ENCODE measurements at regions of chr14 and their contacts with region 1.

Region 1: GRCh38 chr14:101964297-101965144 is at the start of gene DYNC1H1:
- DNase-seq: peak; percentile 85 to 92 (median 89)
- H3K4me3 ChIP-seq: peak within 1 kb of the TSS; percentile 45 to 82
- H3K4me3 Mint-ChIP-seq: peak within 1 kb of the TSS; percentile 89 to 92 (median 91)
- H3K27ac ChIP-seq: peak within 1 kb of the TSS; percentile 79
- H3K27ac Mint-ChIP-seq: peak within 1 kb of the TSS; percentile 92 to 96 (median 93)
- H3K4me1 ChIP-seq: peaks cover 46% of the 10 kb centered on the region
- H3K4me1 Mint-ChIP-seq: peaks cover 27 to 61% (median 43%) of the 10 kb centered on the region in 4 donors
- H3K27me3 ChIP-seq: no peaks in the 10 kb centered on the region
- H3K27me3 Mint-ChIP-seq: no peaks in the 10 kb centered on the region
- total RNA-seq, gene DYNC1H1: 314 to 318 TPM

Region 2: GRCh38 chr14:101947906-101948665 is 16.4 kb before region 1 on chr14:
- CTCF ChIA-PET with region 1: interaction called, 8 read pairs
- POLR2A ChIA-PET with region 1: interaction called, 32 read pairs
- intact Hi-C with region 1: loop called (anchors 1 kb)
- DNase-seq: peak; percentile 99 to 100 (median 100)
- H3K4me3 ChIP-seq: peak overlapping the region; percentile 87 to 98
- H3K4me3 Mint-ChIP-seq: peak overlapping the region; percentile 92 to 99 (median 96)
- H3K27ac ChIP-seq: peak overlapping the region; percentile 94
- H3K27ac Mint-ChIP-seq: peak overlapping the region; percentile 99 to 100 (median 100)
- H3K4me1 ChIP-seq: peaks cover 13% of the 10 kb centered on the region
- H3K4me1 Mint-ChIP-seq: peaks cover 6 to 31% (median 21%) of the 10 kb centered on the region in 4 donors
- H3K27me3 ChIP-seq: peaks cover 5% of the 10 kb centered on the region
- H3K27me3 Mint-ChIP-seq: peaks cover 9 to 16% of the 10 kb centered on the region in 2 donors

Region 3: DNA sequence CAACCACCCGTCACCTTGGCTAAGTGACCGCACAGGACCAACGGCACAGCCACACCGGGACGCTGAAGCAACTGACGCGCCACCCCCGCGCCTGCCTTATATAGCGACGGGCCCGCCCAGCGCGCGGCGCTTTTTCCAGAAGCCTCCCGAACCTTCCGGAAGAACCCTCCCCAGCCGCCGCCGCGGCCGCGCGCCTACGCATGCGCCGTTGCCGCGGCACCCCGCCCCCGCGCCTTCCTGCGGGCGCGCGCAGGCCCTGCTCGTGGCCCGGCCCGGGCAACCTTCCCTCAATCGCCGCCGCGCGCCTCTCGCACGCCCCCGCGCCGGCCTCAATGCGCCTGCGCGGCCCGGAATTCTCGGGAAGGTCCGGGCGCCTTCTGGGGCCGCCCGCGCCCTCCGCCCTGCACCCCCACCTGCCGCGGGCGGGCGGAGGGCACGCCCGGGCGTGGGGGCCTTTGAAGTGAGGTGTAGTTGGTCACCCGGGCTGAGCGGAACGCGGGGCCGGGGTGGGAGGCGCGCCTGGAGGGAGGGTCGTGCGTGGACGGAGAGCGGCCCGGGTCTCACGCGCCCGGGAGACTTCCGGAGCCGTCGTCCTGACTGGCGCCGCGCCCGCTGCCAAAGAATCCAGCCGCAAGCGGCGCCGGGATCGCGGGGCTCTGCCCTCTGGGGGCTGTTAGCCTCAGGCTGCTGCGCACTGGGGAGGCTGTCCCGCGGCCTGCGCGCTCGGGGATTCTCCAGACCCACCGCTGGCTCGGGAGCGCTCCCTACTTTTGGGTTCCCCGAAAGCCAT is 122.6 kb after region 1 on chr14 and contains the start of gene HSP90AA1:
- CTCF ChIA-PET with region 1: interaction called, 3 read pairs
- POLR2A ChIA-PET with region 1: interaction called, 6 read pairs
- intact Hi-C with region 1: loop called (anchors 1 kb)
- DNase-seq: peak; percentile 90 to 95 (median 94)
- H3K4me3 ChIP-seq: peak within 1 kb of the TSS; percentile 80 to 85
- H3K4me3 Mint-ChIP-seq: peak within 1 kb of the TSS; percentile 91 to 99 (median 97)
- H3K27ac ChIP-seq: peak within 1 kb of the TSS; percentile 94
- H3K27ac Mint-ChIP-seq: peak within 1 kb of the TSS; percentile 93 to 99 (median 97)
- H3K4me1 ChIP-seq: peaks cover 51% of the 10 kb centered on the region
- H3K4me1 Mint-ChIP-seq: peaks cover 46 to 68% (median 56%) of the 10 kb centered on the region in 4 donors
- H3K27me3 ChIP-seq: no peaks in the 10 kb centered on the region
- H3K27me3 Mint-ChIP-seq: no peaks in the 10 kb centered on the region
- total RNA-seq, gene HSP90AA1: 275 to 297 TPM

Region 4: DNA sequence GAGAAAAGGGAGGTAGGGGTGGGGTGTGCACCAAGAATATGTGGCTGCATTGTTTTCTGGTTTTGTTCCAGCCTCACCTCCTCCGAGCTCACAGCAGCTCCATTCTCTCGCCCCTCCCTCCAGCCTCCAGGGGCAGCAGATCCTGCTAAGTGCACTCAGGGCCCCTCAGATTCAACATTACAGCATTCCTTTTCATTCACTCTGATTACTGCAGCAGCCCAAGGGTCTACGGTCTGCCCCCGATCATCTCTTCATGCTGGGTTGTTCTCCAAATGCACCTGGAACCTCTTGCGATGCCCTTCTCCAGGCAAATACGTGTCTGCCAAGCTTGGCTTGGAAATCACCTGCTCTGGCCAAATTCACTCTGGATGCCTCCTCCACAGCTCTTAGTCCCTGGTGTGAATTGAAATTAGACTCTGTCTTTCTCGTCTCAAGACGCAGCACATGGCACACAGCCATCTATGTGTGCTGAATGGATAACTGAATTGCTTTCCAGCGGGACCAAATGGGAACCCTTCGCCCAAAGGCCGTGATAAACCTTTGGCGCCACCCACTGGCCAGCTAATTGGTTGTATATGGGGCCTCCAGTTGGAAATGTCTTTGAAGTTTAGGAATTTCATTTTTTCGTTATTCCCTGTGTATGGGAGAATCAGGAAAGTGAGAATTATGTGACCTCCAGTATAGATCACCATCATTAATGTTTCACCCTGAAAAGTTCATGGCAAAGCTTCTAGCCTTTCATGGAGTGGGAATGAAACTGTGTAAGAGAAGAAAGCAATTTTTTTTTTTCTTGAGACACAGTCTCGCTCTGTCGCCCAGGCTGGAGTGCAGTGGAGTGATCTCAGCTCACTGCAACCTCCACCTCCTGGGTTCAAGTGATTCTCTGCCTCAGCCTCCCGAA is 131.9 kb after region 1 on chr14:
- CTCF ChIA-PET with region 1: interaction called, 77 read pairs
- POLR2A ChIA-PET with region 1: interaction called, 4 read pairs
- intact Hi-C with region 1: loop called (anchors 1 kb)
- DNase-seq: peak; percentile 45 to 66 (median 52)
- H3K4me3 ChIP-seq: no peak overlapping the region
- H3K4me3 Mint-ChIP-seq: no peak overlapping the region
- H3K27ac ChIP-seq: no peak overlapping the region
- H3K27ac Mint-ChIP-seq: peak overlapping the region in 3 of 7 donors; percentile 74 to 75 (median 74)
- H3K4me1 ChIP-seq: no peaks in the 10 kb centered on the region
- H3K4me1 Mint-ChIP-seq: peaks cover 0 to 4% (median under 1%) of the 10 kb centered on the region in 4 donors
- H3K27me3 ChIP-seq: no peaks in the 10 kb centered on the region
- H3K27me3 Mint-ChIP-seq: no peaks in the 10 kb centered on the region

Region 5: DNA sequence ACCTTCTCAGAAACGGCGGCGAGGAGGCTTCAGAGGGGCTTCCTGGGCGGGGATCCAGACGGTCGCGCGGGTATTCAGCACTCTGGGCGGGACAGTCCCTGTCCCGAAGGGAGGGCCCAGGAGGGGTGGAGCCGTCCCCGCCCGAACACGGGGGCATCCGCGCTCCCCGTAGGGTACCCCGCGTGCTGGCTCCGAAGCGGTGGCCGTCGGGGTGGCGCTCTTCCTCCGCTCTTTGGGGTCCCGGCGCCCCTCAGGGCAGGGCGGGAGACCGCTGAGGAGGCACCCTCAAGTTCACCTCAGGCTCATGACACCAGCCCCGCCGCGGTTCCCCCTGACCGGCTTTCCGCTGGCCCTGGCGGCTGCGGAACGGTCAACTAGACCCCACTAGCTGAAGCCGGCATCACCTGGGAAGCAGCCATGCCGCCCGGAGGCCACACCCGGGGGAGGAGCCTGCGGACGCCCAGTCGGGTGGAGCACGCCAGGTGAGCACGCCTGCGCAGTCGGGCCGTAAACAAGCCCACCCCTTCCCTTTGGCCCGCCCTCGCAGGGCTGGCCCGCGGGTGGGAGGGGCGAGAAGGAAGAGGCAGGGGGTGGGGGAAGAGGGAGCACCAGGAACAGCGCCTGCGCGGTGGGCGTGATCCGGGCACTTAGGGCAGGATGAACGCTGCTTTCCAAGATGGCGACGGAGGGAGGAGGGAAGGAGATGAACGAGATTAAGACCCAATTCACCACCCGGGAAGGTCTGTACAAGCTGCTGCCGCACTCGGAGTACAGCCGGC is 174.9 kb after region 1 on chr14 and contains the start of gene WDR20:
- CTCF ChIA-PET with region 1: no interaction called
- POLR2A ChIA-PET with region 1: interaction called, 3 read pairs
- intact Hi-C with region 1: loop called (anchors 1 kb)
- DNase-seq: peak; percentile 98 to 100 (median 100)
- H3K4me3 ChIP-seq: peak within 1 kb of the TSS; percentile 65 to 91
- H3K4me3 Mint-ChIP-seq: peak within 1 kb of the TSS; percentile 97 to 99 (median 98)
- H3K27ac ChIP-seq: peak within 1 kb of the TSS; percentile 92
- H3K27ac Mint-ChIP-seq: peak within 1 kb of the TSS; percentile 95 to 98 (median 97)
- H3K4me1 ChIP-seq: peaks cover 30% of the 10 kb centered on the region
- H3K4me1 Mint-ChIP-seq: peaks cover 19 to 25% (median 21%) of the 10 kb centered on the region in 4 donors
- H3K27me3 ChIP-seq: no peaks in the 10 kb centered on the region
- H3K27me3 Mint-ChIP-seq: no peaks in the 10 kb centered on the region
- total RNA-seq, gene WDR20: 56.8 to 57.9 TPM

Region 6: DNA sequence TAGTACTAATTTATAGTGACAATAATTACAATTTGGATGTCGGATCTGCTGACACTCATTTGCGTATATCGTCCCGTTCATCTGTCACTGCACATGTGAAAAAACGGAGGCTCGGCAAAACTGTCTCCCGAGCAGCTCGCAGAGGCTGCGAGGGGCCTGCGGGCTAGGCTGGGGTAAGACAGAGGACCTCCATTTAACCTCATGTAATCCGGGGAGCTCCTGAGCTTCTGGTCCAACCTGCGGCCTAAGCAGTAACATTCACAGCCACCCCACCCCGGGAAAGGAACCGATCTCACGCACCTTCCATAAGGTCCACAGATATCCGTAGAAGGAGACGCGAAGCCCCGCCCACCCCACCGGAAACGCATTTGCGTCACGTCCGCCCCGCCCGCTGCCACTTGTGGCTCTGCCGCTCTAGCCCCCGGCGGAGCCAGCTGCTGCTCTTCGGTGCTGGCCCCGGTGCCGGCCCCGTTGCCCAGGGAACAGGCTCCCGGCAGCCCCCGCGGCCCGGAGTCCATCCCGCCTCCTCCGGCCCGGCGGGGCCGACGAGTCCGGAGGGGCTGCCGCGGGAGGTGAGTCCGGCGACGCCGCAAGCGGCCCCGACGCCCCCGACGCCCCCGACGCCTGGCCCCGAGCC is 398.1 kb after region 1 on chr14 and contains the starts of genes CINP and TECPR2:
- CTCF ChIA-PET with region 1: no interaction called
- POLR2A ChIA-PET with region 1: no interaction called
- intact Hi-C with region 1: loop called (anchors 2 kb)
- DNase-seq: peak; percentile 91 to 97 (median 93)
- H3K4me3 ChIP-seq: peak within 1 kb of the TSS; percentile 80 to 95
- H3K4me3 Mint-ChIP-seq: peak within 1 kb of the TSS in 7 of 8 donors; percentile 94 to 98 (median 97)
- H3K27ac ChIP-seq: peak within 1 kb of the TSS; percentile 87
- H3K27ac Mint-ChIP-seq: peak within 1 kb of the TSS; percentile 93 to 99 (median 98)
- H3K4me1 ChIP-seq: peaks cover 33% of the 10 kb centered on the region
- H3K4me1 Mint-ChIP-seq: peaks cover 19 to 39% (median 26%) of the 10 kb centered on the region in 4 donors
- H3K27me3 ChIP-seq: no peaks in the 10 kb centered on the region
- H3K27me3 Mint-ChIP-seq: no peaks in the 10 kb centered on the region
- total RNA-seq, gene CINP: 31.5 to 32.3 TPM
- total RNA-seq, gene TECPR2: 9.9 to 12.6 TPM

Region 7: DNA sequence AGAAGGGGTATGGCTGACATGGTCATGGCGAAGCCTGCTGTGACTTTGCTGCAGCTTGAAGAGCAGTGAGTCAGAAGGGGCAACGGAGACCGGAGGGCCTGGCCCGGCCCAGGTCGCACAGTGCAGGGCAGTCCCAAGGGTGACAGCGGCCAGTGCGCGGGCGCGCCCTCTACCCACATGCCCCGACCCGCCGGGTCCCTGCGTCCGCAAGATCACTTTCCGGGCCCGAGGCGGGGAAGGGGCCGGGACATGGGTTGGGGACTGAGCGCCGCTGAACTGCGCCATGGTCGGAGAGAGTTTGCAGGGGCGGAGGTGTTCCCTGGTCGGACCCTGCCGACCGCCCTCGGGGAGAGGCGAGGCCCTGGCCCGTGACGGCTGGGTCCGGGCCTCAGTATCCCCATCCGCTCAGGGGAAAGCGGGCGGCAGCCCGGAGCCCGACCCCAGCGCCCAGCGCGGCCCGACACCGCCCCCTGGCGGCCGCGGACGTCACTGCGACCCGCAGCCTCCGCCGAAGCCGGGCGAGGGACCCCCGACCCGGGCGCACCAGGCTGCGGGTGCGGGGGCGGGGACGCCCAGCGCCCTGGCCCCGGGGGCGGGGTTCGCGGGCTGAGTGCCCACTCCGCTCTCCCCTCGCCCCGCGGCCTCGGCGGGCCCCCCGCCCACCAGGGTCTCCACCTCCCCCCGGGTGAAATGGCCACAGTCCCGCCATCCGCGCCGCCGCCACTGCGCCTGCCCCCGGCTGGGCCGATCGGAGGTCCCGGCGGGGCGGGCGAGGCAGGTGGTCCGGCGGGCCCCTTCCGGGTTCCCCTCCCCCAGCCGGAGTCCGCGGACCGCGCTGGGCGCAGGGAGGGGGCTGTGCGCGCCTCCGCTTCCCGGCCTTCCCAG is 552.3 kb after region 1 on chr14:
- CTCF ChIA-PET with region 1: interaction called, 3 read pairs
- POLR2A ChIA-PET with region 1: no interaction called
- intact Hi-C with region 1: loop called (anchors 5 kb)
- DNase-seq: peak in 4 of 5 donors; percentile 49 to 71 (median 57)
- H3K4me3 ChIP-seq: peak overlapping the region in 1 of 2 donors; percentile 64
- H3K4me3 Mint-ChIP-seq: peak overlapping the region; percentile 75 to 89 (median 84)
- H3K27ac ChIP-seq: peak overlapping the region; percentile 31
- H3K27ac Mint-ChIP-seq: peak overlapping the region in 4 of 7 donors; percentile 46 to 86 (median 57)
- H3K4me1 ChIP-seq: peaks cover 9% of the 10 kb centered on the region
- H3K4me1 Mint-ChIP-seq: peaks cover 3 to 9% (median 4%) of the 10 kb centered on the region in 4 donors
- H3K27me3 ChIP-seq: no peaks in the 10 kb centered on the region
- H3K27me3 Mint-ChIP-seq: peaks cover 2 to 3% of the 10 kb centered on the region in 2 donors

Measured in CD4-positive, alpha-beta memory T cell (primary cell).